GM10248 (cell line): ENCODE measurements at regions of chr4 and their contacts with region 1.

Region 1: GRCh38 chr4:128542041-128542440 is 254.4 kb upstream of the PGRMC2 start:
- DNase-seq: no peak
- CTCF ChIP-seq: no peak

Region 2: DNA sequence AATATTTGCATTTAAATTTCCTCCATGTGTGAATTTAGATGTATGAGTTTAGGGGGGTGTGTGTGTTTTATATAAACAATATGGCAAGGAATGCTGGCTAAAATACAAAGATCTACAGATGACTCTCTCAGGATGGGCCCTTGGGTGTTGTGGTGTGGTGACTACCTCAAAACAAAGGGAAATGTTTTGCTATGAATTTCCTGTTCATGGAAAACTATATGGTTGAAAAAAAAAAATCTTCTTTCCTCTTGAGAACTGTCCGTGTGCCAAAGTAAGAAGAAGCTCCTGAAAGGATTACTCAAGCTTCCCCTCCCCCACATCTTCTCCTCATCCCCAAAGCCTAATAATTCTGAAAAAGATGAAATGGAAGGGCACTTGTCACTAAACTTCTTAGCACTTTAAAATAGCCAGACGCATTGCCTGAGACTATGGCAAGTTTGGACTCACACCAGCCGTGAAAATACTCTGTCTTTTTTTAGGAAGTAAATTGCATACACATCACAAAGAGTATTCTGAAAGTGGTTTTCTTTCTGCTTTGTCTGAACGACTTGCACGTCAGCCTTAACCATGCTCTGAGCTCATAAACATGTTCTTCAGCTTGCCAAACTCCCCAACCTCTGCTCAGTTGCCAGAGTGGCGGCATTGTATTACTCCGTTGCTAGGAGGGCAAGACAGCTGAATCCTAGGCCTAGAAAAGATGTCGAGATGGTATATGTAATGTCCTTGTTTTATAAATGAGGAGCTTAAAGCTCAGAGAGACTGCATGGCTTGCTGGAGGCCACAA is 17.0 kb after region 1 on chr4:
- CTCF ChIA-PET with region 1: interaction called, 35 read pairs
- POLR2A ChIA-PET with region 1: no interaction called
- DNase-seq: no peak
- CTCF ChIP-seq: no peak

Region 3: GRCh38 chr4:128574706-128575105 is 32.7 kb after region 1 on chr4:
- CTCF ChIA-PET with region 1: interaction called, 10 read pairs
- POLR2A ChIA-PET with region 1: no interaction called
- DNase-seq: peak; percentile 70
- CTCF ChIP-seq: peak; percentile 51